ENCODE measurements at regions of chr3 and their contacts with region 1.

Region 1: DNA sequence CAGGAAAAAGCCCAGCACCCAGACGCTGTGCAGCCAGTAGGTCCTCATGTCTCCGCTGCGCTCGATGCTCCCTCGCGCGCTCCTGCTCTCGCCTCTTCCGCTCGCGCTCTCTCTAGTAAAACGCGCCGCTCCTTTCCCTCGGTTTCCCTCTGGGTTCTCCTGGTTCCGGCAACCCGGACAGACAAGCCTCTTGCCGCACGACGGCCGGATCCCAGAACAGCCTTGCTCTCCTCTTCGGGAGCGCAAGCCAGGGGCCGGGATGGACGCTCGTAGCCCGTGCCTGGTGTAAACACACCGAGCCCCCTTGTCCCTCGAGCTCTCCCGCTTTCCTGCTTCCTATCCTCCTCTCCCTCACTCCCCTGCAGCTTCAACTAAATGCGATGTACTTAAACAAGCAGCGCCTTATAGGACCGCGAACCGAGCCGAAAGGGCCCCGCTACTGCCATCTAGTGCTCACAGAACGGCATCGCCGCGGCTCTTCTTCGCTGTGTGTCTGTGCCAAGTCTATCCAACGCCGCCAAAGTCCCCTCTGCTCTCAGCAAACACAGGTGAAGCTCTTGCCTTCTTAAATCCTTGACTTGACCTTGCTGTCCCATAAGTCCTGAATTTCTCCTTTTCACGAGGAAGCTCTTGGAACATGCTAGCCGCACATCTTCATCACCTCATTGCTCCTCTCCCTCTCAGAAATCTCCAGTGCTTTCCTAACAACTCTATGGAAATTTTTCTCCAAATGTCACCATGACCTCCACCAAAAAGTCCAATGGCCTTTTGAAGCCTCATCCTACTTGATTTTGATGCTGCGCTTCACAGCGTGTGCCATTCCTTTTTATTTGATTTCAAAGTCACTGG is 1037.2 kb downstream of the IGSF11 start:
- DNase-seq: peak; percentile 50
- H3K4me3 ChIP-seq: peak overlapping the region; percentile 14 to 51 (median 43)
- H3K27ac ChIP-seq: no peak overlapping the region
- H3K4me1 ChIP-seq: peaks cover 10% of the 10 kb centered on the region
- H3K27me3 ChIP-seq: peaks cover 11% of the 10 kb centered on the region
- CTCF ChIP-seq: peak; percentile 91 to 97

Region 2: DNA sequence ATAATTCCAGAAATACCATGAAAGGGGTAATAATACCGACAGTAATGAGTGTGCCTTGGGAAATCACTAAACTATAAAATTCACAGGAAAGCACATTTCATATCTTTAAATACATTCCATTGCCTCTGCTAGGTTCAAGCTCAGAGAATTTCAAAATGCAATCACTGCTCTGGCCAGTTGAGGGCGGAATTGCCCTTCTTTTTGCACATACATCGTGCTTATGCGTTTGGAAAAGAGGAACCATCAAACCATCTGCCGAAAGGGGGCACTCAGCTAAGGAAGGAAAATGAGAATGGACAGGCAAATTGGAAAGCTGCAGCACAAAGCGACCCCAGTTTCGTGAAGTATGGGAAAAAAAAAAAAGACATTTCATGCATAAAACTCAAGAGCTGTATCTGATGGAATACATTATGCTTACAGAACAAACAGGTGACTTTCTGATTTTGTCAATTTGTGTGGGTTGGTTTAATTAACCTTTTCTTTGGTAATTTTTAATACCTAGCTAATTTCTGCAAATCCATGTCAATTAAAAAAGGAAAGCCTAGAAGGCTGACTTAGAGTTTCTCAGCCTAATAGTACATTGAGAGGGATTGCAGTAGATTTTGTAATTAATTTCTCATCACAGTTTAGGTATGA is 1226.5 kb before region 1 on chr3:
- CTCF ChIA-PET with region 1: no interaction called
- dilution Hi-C with region 1: no loop called
- in situ Hi-C with region 1: no loop called
- intact Hi-C with region 1: loop called (anchors 5 kb)
- DNase-seq: peak; percentile 55
- H3K4me3 ChIP-seq: no peak overlapping the region
- H3K27ac ChIP-seq: no peak overlapping the region
- H3K4me1 ChIP-seq: no peaks in the 10 kb centered on the region
- H3K27me3 ChIP-seq: no peaks in the 10 kb centered on the region
- CTCF ChIP-seq: peak; percentile 93 to 98